CD8-positive, alpha-beta memory T cell (primary cell): ENCODE measurements at regions of chr3 and their contacts with region 1.

Region 1: GRCh38 chr3:195511136-195511535 is 32.0 kb downstream of the PPP1R2 start:
- DNase-seq: no peak
- H3K4me3 ChIP-seq: no peak overlapping the region
- H3K4me3 Mint-ChIP-seq: no peak overlapping the region
- H3K27ac ChIP-seq: no peak overlapping the region
- H3K27ac Mint-ChIP-seq: peak overlapping the region in 5 of 8 donors; percentile 17 to 66 (median 57)
- H3K4me1 ChIP-seq: peaks cover 4% of the 10 kb centered on the region
- H3K4me1 Mint-ChIP-seq: peaks cover 15 to 44% (median 33%) of the 10 kb centered on the region in 3 donors
- H3K27me3 ChIP-seq: no peaks in the 10 kb centered on the region
- H3K27me3 Mint-ChIP-seq: no peaks in the 10 kb centered on the region

Region 2: GRCh38 chr3:195522254-195523023 is 11.3 kb after region 1 on chr3:
- CTCF ChIA-PET with region 1: interaction called, 11 read pairs
- POLR2A ChIA-PET with region 1: interaction called, 5 read pairs
- DNase-seq: peak in 2 of 5 donors; percentile 38 to 48
- H3K4me3 ChIP-seq: no peak overlapping the region
- H3K4me3 Mint-ChIP-seq: no peak overlapping the region
- H3K27ac ChIP-seq: no peak overlapping the region
- H3K27ac Mint-ChIP-seq: peak overlapping the region in 7 of 8 donors; percentile 31 to 68 (median 56)
- H3K4me1 ChIP-seq: peaks cover 46% of the 10 kb centered on the region
- H3K4me1 Mint-ChIP-seq: peaks cover 43 to 66% (median 57%) of the 10 kb centered on the region in 3 donors
- H3K27me3 ChIP-seq: no peaks in the 10 kb centered on the region
- H3K27me3 Mint-ChIP-seq: no peaks in the 10 kb centered on the region